Dorsolateral prefrontal cortex (tissue), 120 donors: ENCODE measurements at regions of chr15 and their contacts with region 1.

Region 1: GRCh38 chr15:35912196-35912595 is 366.2 kb upstream of the DPH6 start:
- DNase-seq: no peak
- H3K4me3 ChIP-seq: no peak overlapping the region
- H3K27ac ChIP-seq: no peak overlapping the region
- H3K27me3 ChIP-seq: peaks cover 0 to 5% (median 0%) of the 10 kb centered on the region in 45 donors
- CTCF ChIP-seq: peak in 29 of 56 donors; percentile 5 to 69 (median 28)

Region 2: GRCh38 chr15:35751413-35752133 is 160.6 kb before region 1 on chr15:
- intact Hi-C with region 1: loop called in 1 of 2 experiments (anchors 10 kb)
- DNase-seq: peak in 9 of 10 donors; percentile 42 to 82 (median 65)
- H3K4me3 ChIP-seq: peak overlapping the region in 39 of 59 donors; percentile 0 to 43 (median 23)
- H3K27ac ChIP-seq: no peak overlapping the region
- H3K27me3 ChIP-seq: peaks cover 0 to 3% (median 0%) of the 10 kb centered on the region in 45 donors
- CTCF ChIP-seq: peak; percentile 60 to 92 (median 82)